Activated naive CD4-positive, alpha-beta T cell treated with anti-CD3 and anti-CD28 coated beads for 36 hours (primary cell): ENCODE measurements at regions of chr9 and their contacts with region 1.

Region 1: GRCh38 chr9:4344946-4345345 is 45.1 kb upstream of the GLIS3 start:
- DNase-seq: peak; percentile 82
- H3K4me3 Mint-ChIP-seq: peak overlapping the region; percentile 28
- H3K27ac Mint-ChIP-seq: peak overlapping the region; percentile 43
- H3K4me1 Mint-ChIP-seq: peaks cover 17% of the 10 kb centered on the region
- H3K27me3 Mint-ChIP-seq: no peaks in the 10 kb centered on the region

Region 2: DNA sequence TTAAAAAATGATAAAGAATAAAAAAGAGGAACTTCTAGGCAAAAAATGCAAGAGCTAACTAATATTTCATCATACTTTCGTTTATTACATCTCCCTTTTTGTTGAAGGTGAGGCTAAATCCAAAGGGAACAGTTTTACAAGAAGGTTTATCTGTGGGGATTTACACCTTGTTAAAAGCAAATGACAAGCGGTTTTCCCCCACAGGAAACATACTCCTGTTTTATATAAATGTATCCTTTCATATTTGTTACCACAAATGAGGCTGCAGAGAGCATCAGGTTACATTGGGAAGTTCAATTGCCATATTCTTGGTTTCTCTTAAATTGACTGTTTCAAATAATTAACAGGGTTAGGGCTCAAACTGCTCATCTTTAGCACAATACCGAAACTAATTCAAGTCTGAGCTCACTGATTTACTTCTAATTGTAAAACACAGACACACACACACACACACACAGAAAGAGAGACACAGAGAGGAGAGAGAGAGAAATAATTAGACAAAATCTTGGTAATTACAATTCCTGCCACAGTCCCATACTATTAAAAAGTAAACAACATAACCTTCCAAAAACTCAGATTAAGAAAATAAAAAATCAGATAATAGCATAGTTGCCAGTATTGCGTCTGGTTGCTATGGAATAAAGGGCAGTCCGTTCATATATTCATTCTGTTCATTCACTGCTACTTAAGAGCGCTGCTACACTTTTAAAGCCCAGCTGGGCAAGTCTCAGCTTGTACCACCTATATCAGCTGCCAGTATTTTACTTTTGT is 836.2 kb before region 1 on chr9:
- CTCF ChIA-PET with region 1: no interaction called
- intact Hi-C with region 1: loop called (anchors 5 kb)
- DNase-seq: no peak
- H3K4me3 Mint-ChIP-seq: peak overlapping the region; percentile 51
- H3K27ac Mint-ChIP-seq: peak overlapping the region; percentile 85
- H3K4me1 Mint-ChIP-seq: peaks cover 63% of the 10 kb centered on the region
- H3K27me3 Mint-ChIP-seq: no peaks in the 10 kb centered on the region

Region 3: DNA sequence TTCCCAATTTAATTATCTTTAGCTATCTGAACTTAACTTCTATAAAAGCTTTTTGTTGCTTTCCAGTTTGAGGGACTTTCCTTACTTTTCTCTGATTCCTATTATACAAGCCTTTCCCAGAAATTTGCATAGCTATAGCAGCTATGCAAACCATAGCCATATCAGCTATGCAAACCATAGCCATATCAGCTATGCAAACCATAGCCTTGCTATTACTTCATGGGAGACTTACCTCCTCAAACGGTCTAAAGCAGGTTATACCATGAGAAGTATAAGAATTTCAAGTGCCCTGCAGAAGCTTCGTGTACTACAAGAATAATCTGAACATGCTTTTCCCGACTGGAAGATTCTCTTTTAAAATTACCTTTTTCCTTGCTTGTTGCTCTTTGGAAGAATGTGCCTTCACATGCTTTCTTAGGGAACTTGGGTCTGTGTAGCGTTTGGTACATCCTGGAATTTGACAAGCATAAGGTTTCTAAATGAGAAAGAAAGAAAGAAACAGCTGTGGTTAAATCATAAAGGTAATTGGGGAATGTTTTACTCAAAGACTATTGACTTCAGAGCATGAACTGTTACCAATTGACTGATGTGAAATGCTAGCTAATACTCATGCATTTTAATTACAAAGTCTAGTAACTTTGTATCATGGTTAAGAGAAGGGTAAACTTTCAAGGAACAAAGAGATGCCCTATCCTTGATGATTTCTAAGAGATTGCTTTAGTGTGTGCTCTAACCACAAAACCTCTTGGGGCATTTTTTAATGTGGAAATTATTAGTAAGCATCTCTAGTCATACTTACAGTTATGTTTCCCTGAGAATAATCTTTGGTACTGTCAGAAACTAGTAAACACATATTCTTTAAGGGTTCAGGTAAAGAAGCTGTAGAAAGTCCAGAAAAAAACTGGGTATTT is 412.7 kb before region 1 on chr9:
- CTCF ChIA-PET with region 1: no interaction called
- intact Hi-C with region 1: loop called (anchors 10 kb)
- DNase-seq: no peak
- H3K4me3 Mint-ChIP-seq: no peak overlapping the region
- H3K27ac Mint-ChIP-seq: peak overlapping the region; percentile 73
- H3K4me1 Mint-ChIP-seq: peaks cover 22% of the 10 kb centered on the region
- H3K27me3 Mint-ChIP-seq: peaks cover 2% of the 10 kb centered on the region

Region 4: GRCh38 chr9:4062966-4063365 is 282.0 kb before region 1 on chr9:
- CTCF ChIA-PET with region 1: no interaction called
- intact Hi-C with region 1: no loop called
- DNase-seq: no peak
- H3K4me3 Mint-ChIP-seq: no peak overlapping the region
- H3K27ac Mint-ChIP-seq: no peak overlapping the region
- H3K4me1 Mint-ChIP-seq: no peaks in the 10 kb centered on the region
- H3K27me3 Mint-ChIP-seq: no peaks in the 10 kb centered on the region

Region 5: GRCh38 chr9:4306066-4306775 is 38.7 kb before region 1 on chr9:
- CTCF ChIA-PET with region 1: interaction called, 3 read pairs
- intact Hi-C with region 1: loop called (anchors 1 kb)
- DNase-seq: peak; percentile 82
- H3K4me3 Mint-ChIP-seq: no peak overlapping the region
- H3K27ac Mint-ChIP-seq: peak overlapping the region; percentile 11
- H3K4me1 Mint-ChIP-seq: peaks cover 55% of the 10 kb centered on the region
- H3K27me3 Mint-ChIP-seq: no peaks in the 10 kb centered on the region

Region 6: DNA sequence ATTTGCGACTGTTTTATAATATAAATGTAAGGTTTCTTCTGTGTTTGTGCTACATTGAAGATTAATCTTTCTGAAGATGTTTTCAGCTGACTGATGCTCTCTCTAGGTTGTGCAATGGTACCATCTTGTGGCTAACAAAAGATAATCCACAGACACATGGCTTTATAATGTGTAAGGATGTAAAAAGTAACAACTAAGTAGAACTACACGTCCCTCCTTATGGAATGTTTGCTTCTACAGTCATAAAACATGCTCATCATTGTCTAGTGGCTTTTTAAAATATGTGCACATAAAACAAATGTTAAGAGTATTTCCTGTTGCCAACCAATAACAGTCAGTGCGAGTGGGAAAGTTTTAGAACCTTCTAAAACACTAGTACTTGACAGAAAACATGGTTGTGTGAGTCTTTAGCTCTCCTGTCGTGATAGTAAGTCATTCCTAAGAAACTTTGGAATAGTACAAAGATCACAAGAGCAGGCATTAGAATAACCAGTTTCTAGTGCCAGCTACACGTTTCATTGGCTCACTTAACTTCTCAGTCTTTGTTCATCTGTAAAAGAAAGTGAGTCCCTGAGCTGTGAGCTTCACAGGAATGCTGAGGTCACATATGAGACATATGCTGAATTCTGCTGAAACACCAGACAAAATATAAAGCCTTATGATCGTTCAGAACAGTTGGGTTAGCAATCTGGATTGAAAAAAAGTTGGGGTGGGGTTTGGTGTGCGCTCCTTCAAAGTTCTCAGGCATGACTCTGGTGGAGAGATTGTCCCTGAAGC is 30.7 kb after region 1 on chr9:
- CTCF ChIA-PET with region 1: no interaction called
- intact Hi-C with region 1: no loop called
- DNase-seq: no peak
- H3K4me3 Mint-ChIP-seq: no peak overlapping the region
- H3K27ac Mint-ChIP-seq: no peak overlapping the region
- H3K4me1 Mint-ChIP-seq: no peaks in the 10 kb centered on the region
- H3K27me3 Mint-ChIP-seq: peaks cover 3% of the 10 kb centered on the region

Region 7: GRCh38 chr9:4725706-4726442 is 380.9 kb after region 1 on chr9:
- CTCF ChIA-PET with region 1: no interaction called
- intact Hi-C with region 1: no loop called
- DNase-seq: no peak
- H3K4me3 Mint-ChIP-seq: no peak overlapping the region
- H3K27ac Mint-ChIP-seq: no peak overlapping the region
- H3K4me1 Mint-ChIP-seq: peaks cover 25% of the 10 kb centered on the region
- H3K27me3 Mint-ChIP-seq: no peaks in the 10 kb centered on the region